Adrenal gland (tissue), 19 donors: ENCODE measurements at regions of chr1 and their contacts with region 1.

Region 1: DNA sequence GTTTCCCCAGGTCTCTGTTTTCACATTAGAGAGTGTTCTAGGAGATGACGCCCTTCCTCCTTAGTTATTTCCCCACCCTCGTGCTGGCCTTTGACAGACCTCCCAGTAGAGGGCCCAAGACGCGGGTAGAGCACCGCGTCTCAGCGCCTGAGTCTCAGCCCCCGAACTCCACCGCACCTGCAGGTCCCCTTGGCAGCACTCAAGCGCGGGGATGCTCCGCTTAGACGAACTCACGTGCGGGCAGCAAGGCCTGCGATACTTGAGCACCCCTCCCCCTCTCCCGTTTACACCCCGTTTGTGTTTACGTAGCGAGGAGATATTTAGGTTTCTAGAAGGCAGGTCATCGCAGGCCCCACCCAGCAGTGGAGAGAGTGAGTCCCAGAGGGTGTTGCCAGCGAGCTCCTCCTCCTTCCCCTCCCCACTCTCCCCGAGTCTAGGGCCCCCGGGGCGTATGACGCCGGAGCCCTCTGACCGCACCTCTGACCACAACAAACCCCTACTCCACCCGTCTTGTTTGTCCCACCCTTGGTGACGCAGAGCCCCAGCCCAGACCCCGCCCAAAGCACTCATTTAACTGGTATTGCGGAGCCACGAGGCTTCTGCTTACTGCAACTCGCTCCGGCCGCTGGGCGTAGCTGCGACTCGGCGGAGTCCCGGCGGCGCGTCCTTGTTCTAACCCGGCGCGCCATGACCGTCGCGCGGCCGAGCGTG is at the start of gene CD55:
- DNase-seq: peak; percentile 97 to 99 (median 98)
- H3K4me3 ChIP-seq: peak within 1 kb of the TSS; percentile 48 to 87 (median 75)
- H3K27ac ChIP-seq: peak within 1 kb of the TSS; percentile 63 to 94 (median 92)
- H3K4me1 ChIP-seq: peaks cover 21 to 50% of the 10 kb centered on the region in 2 donors
- H3K27me3 ChIP-seq: no peaks in the 10 kb centered on the region
- CTCF ChIP-seq: peak; percentile 9 to 57 (median 31)
- POLR2A ChIP-seq: peak; percentile 93 to 98
- total RNA-seq, gene CD55: 76.1 to 600 (median 256) TPM

Region 2: DNA sequence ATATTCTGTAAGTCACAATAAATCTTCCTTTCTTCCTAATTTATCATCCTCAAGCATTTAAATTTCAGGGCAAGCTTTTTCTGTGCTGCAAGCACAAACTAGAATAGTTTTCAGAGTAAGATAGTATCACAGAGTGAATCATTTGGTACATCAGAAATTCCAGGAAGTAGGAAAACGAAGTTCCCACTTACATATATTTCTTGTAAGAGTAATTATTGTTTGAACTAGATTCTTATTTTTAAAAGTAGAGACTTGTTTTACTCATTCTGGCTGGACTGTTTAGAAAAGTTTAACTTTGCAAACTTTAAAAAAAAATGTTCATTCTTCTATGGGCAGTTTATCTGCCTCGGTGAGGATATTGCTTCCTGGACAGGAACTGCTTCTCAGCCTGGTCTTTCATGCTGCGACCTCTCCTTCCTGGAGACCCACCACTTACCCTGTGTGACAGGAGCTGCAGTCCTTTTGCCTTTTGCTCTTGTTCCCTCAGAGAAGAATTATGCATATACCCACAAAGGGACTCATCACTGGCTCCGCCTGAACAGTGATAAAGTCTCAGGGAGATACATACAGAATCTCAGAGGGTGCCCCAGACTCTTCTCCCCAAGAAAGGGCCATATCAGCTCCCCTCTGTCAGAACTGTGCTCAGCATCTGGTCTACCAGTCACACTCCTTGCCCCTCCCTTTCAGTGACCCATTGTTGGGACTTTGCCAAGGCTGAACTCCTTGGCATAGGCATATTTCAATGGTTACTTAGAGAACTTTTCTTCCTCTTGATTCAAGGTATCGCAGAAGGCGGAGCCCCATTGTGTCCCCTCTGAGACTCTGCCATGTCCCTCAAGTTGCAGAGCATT is 102.5 kb before region 1 on chr1:
- intact Hi-C with region 1: loop called in 1 of 2 experiments (anchors 10 kb)
- DNase-seq: peak; percentile 56 to 76 (median 62)
- H3K4me3 ChIP-seq: peak overlapping the region in 1 of 4 donors; percentile 32
- H3K27ac ChIP-seq: peak overlapping the region in 4 of 5 donors; percentile 46 to 67 (median 56)
- H3K4me1 ChIP-seq: peaks cover 22 to 36% of the 10 kb centered on the region in 2 donors
- H3K27me3 ChIP-seq: no peaks in the 10 kb centered on the region
- CTCF ChIP-seq: no peak
- POLR2A ChIP-seq: no peak